B cell (primary cell): ENCODE measurements at regions of chr22 and their contacts with region 1.

Region 1: GRCh38 chr22:41381329-41382097 is at the start of gene TEF:
- DNase-seq: peak; percentile 98
- ATAC-seq: peak; percentile 81
- H3K4me3 ChIP-seq: peak within 1 kb of the TSS; percentile 56 to 93 (median 70)
- H3K4me3 Mint-ChIP-seq: peak within 1 kb of the TSS; percentile 88
- H3K27ac ChIP-seq: peak within 1 kb of the TSS; percentile 93 to 95
- H3K27ac Mint-ChIP-seq: peak within 1 kb of the TSS; percentile 99
- H3K4me1 ChIP-seq: peaks cover 10 to 18% of the 10 kb centered on the region in 2 donors
- H3K4me1 Mint-ChIP-seq: peaks cover 20% of the 10 kb centered on the region
- H3K27me3 ChIP-seq: no peaks in the 10 kb centered on the region
- H3K27me3 Mint-ChIP-seq: no peaks in the 10 kb centered on the region
- CTCF ChIP-seq: no peak
- total RNA-seq, gene TEF: 5.5 and 6.8 TPM in 2 replicates

Region 2: GRCh38 chr22:40856513-40857308 is 524.8 kb before region 1 on chr22 and contains the starts of genes ST13 and XPNPEP3:
- CTCF ChIA-PET with region 1: no interaction called
- POLR2A ChIA-PET with region 1: interaction called, 7 read pairs
- intact Hi-C with region 1: loop called (anchors 5 kb)
- DNase-seq: peak; percentile 98
- ATAC-seq: peak; percentile 88
- H3K4me3 ChIP-seq: peak within 1 kb of the TSS; percentile 82 to 98 (median 94)
- H3K4me3 Mint-ChIP-seq: peak within 1 kb of the TSS; percentile 97
- H3K27ac ChIP-seq: peak within 1 kb of the TSS; percentile 91 to 94
- H3K27ac Mint-ChIP-seq: peak within 1 kb of the TSS; percentile 100
- H3K4me1 ChIP-seq: peaks cover 24 to 28% of the 10 kb centered on the region in 2 donors
- H3K4me1 Mint-ChIP-seq: peaks cover 46% of the 10 kb centered on the region
- H3K27me3 ChIP-seq: no peaks in the 10 kb centered on the region
- H3K27me3 Mint-ChIP-seq: no peaks in the 10 kb centered on the region
- CTCF ChIP-seq: peak; percentile 71
- total RNA-seq, gene ST13: 175 and 187 TPM in 2 replicates
- total RNA-seq, gene XPNPEP3: 18.9 and 24.2 TPM in 2 replicates

Region 3: DNA sequence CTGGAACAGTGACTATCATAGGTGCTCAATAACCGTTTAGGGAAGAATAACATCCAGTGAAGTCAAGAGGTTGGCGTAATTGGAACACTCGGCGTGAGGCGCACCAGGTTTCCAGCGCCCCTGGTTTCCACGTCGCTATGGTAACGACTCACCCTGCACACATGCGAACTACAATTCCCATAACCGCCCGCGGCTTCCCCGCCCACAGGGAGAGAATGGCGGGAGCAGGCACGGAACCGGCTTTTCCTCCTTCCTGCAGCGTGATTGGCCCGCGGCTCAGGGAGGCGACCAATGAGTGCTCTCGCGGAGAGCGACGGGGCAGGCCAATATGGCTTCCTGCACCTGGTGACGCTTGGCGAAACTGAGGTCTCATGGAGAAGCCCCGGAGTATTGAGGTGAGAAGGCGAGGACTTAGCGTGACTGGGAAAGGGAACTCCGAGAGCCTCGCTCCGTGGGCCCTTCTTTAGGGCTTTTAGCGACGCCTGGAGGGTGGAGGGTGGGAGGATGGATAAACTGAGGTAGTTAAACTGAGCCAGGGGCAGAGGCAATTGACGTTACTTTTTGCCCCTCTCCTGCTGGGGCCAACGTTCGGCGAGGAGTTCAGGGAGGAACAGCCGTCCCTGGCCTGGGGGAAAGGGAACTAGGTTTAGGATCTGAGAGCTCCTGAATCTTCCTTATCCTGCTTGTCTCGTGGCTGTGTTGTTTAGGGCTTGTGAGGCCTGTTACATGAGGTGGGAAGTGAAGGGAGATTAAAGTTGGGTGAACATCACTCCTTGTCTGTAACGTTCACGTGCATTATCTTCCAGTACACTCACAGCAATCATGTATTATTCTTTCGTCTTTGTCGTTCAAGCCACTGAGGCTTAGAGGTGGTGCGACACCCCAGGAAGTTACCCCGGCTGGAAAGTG is 176.3 kb before region 1 on chr22 and contains the start of gene L3MBTL2:
- CTCF ChIA-PET with region 1: no interaction called
- POLR2A ChIA-PET with region 1: no interaction called
- intact Hi-C with region 1: loop called (anchors 5 kb)
- DNase-seq: peak; percentile 98
- ATAC-seq: peak; percentile 100
- H3K4me3 ChIP-seq: peak within 1 kb of the TSS; percentile 81 to 96 (median 90)
- H3K4me3 Mint-ChIP-seq: peak within 1 kb of the TSS; percentile 94
- H3K27ac ChIP-seq: peak within 1 kb of the TSS; percentile 70 to 73
- H3K27ac Mint-ChIP-seq: peak within 1 kb of the TSS; percentile 88
- H3K4me1 ChIP-seq: peaks cover 9 to 14% of the 10 kb centered on the region in 2 donors
- H3K4me1 Mint-ChIP-seq: peaks cover 28% of the 10 kb centered on the region
- H3K27me3 ChIP-seq: peaks cover 0 to 12% (median 0%) of the 10 kb centered on the region in 4 experiments
- H3K27me3 Mint-ChIP-seq: peaks cover 6% of the 10 kb centered on the region
- CTCF ChIP-seq: no peak
- total RNA-seq, gene L3MBTL2: 32.4 and 37.3 TPM in 2 replicates

Region 4: GRCh38 chr22:41403532-41404318 is 22.2 kb after region 1 on chr22:
- CTCF ChIA-PET with region 1: interaction called, 12 read pairs
- POLR2A ChIA-PET with region 1: interaction called, 3 read pairs
- intact Hi-C with region 1: no loop called
- DNase-seq: peak; percentile 89
- ATAC-seq: peak; percentile 87
- H3K4me3 ChIP-seq: no peak overlapping the region
- H3K4me3 Mint-ChIP-seq: no peak overlapping the region
- H3K27ac ChIP-seq: no peak overlapping the region
- H3K27ac Mint-ChIP-seq: peak overlapping the region; percentile 15
- H3K4me1 ChIP-seq: peaks cover 8 to 30% of the 10 kb centered on the region in 2 donors
- H3K4me1 Mint-ChIP-seq: peaks cover 31% of the 10 kb centered on the region
- H3K27me3 ChIP-seq: no peaks in the 10 kb centered on the region
- H3K27me3 Mint-ChIP-seq: no peaks in the 10 kb centered on the region
- CTCF ChIP-seq: peak; percentile 94

Region 5: GRCh38 chr22:41468381-41469217 is 87.1 kb after region 1 on chr22 and contains the starts of genes ACO2 and PHF5A:
- CTCF ChIA-PET with region 1: interaction called, 6 read pairs
- POLR2A ChIA-PET with region 1: interaction called, 11 read pairs
- intact Hi-C with region 1: loop called (anchors 1 kb)
- DNase-seq: peak; percentile 99
- ATAC-seq: peak; percentile 91
- H3K4me3 ChIP-seq: peak within 1 kb of the TSS; percentile 71 to 98 (median 86)
- H3K4me3 Mint-ChIP-seq: peak within 1 kb of the TSS; percentile 89
- H3K27ac ChIP-seq: peak within 1 kb of the TSS; percentile 99
- H3K27ac Mint-ChIP-seq: peak within 1 kb of the TSS; percentile 98
- H3K4me1 ChIP-seq: peaks cover 20 to 31% of the 10 kb centered on the region in 2 donors
- H3K4me1 Mint-ChIP-seq: peaks cover 59% of the 10 kb centered on the region
- H3K27me3 ChIP-seq: no peaks in the 10 kb centered on the region
- H3K27me3 Mint-ChIP-seq: no peaks in the 10 kb centered on the region
- CTCF ChIP-seq: no peak
- total RNA-seq, gene ACO2: 91.7 and 104 TPM in 2 replicates
- total RNA-seq, gene PHF5A: 31.6 and 34.5 TPM in 2 replicates

Region 6: GRCh38 chr22:41621099-41621910 is 239.8 kb after region 1 on chr22 and contains the start of gene XRCC6:
- CTCF ChIA-PET with region 1: interaction called, 3 read pairs
- POLR2A ChIA-PET with region 1: interaction called, 4 read pairs
- intact Hi-C with region 1: loop called (anchors 2 kb)
- DNase-seq: peak; percentile 100
- ATAC-seq: peak; percentile 96
- H3K4me3 ChIP-seq: peak within 1 kb of the TSS; percentile 68 to 97 (median 89)
- H3K4me3 Mint-ChIP-seq: peak within 1 kb of the TSS; percentile 96
- H3K27ac ChIP-seq: peak within 1 kb of the TSS; percentile 95 to 96
- H3K27ac Mint-ChIP-seq: peak within 1 kb of the TSS; percentile 94
- H3K4me1 ChIP-seq: peaks cover 19 to 27% of the 10 kb centered on the region in 2 donors
- H3K4me1 Mint-ChIP-seq: peaks cover 39% of the 10 kb centered on the region
- H3K27me3 ChIP-seq: no peaks in the 10 kb centered on the region
- H3K27me3 Mint-ChIP-seq: no peaks in the 10 kb centered on the region
- CTCF ChIP-seq: no peak
- total RNA-seq, gene XRCC6: 176 and 180 TPM in 2 replicates

Region 7: DNA sequence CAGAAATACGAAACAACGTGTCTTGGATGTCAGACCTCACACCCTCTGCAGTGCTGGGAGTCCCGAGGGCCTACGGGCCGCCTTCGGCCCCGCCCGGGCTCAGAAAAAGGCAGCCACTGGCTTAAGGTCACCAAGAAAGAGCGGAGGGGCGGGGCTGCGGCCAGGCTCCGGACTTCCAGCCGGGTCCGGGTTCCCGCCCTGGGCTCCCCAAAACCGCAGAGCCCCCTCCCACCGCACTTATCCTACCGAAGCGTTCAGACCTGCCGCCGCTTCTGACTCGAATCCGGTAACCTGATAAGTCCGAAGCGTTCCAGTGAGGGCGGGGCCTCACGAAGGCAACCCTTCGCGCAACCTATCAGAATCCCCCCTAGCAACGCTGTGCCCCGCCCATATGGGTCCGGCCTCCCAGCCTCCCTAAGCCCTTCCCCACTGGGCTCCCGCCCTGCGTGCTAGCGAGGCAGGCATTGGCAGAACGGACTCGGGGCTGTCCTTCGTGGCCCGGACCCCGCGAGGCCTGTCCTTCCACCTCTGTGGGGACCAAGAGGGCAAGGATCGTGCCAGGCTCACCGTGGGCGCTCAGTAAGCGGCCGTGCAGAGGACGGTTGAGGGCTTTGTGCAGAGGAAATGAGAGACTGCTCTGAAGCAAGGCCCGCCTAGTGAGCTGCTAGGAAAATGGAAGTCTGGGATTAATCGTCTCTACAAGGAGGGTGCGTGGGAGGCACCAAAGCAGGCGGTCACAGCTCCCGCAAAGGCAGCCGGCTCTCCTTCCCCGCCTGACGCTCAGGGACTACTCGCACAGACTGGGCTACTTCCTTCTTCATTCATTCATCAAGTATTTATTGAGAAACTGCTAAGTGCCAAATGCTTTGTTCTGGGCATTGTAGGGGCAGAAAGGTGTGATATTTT is 689.3 kb after region 1 on chr22 and contains the start of gene NAGA:
- CTCF ChIA-PET with region 1: no interaction called
- POLR2A ChIA-PET with region 1: no interaction called
- intact Hi-C with region 1: loop called (anchors 5 kb)
- DNase-seq: peak; percentile 93
- ATAC-seq: peak; percentile 95
- H3K4me3 ChIP-seq: peak within 1 kb of the TSS; percentile 30 to 98 (median 82)
- H3K4me3 Mint-ChIP-seq: peak within 1 kb of the TSS; percentile 93
- H3K27ac ChIP-seq: peak within 1 kb of the TSS; percentile 64 to 69
- H3K27ac Mint-ChIP-seq: peak within 1 kb of the TSS; percentile 94
- H3K4me1 ChIP-seq: peaks cover 20 to 34% of the 10 kb centered on the region in 2 donors
- H3K4me1 Mint-ChIP-seq: peaks cover 46% of the 10 kb centered on the region
- H3K27me3 ChIP-seq: no peaks in the 10 kb centered on the region
- H3K27me3 Mint-ChIP-seq: no peaks in the 10 kb centered on the region
- CTCF ChIP-seq: no peak
- total RNA-seq, gene NAGA: 20.2 and 21.0 TPM in 2 replicates